Body of pancreas (tissue), 4 donors: ENCODE measurements at regions of chr1 and their contacts with region 1.

Region 1: GRCh38 chr1:26608895-26609294 is 79.3 kb downstream of the RPS6KA1 start:
- DNase-seq: no peak
- ATAC-seq: no peak
- H3K4me3 ChIP-seq: no peak overlapping the region
- H3K27ac ChIP-seq: no peak overlapping the region
- H3K4me1 ChIP-seq: no peaks in the 10 kb centered on the region
- H3K27me3 ChIP-seq: no peaks in the 10 kb centered on the region
- CTCF ChIP-seq: no peak
- POLR2A ChIP-seq: no peak

Region 2: DNA sequence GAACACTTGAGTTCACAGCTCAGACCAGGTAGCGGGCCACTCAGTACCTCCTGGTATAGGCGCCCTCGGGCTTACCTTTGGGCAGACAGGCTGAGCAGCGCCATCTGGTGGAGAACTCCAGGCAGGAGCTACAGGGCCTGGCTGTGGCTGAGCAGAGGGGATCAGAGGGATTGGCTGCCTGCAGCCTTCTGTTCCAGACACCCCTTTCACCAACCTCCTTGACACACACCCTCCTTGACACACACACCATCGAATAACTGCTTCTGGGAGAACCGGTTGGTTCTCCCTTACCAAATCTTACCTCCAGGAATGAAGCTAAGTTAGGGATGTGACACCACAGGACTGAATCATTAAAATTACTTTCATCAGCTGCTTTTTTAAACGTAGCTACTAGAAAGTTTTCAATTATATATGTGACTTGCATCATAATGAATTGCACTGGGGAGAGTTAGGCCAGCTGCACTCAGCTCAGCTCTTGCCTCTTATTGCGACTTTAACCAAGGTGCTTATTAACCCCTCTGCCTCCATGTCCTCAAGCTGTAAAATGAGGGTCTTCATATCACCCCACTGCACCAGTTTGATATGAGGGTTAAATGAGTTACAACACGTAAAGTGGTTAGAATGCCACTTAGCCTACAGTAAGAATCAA is 191.7 kb before region 1 on chr1:
- intact Hi-C with region 1: no loop called
- DNase-seq: peak; percentile 77 to 85 (median 78)
- ATAC-seq: peak; percentile 86
- H3K4me3 ChIP-seq: no peak overlapping the region
- H3K27ac ChIP-seq: no peak overlapping the region
- H3K4me1 ChIP-seq: no peaks in the 10 kb centered on the region
- H3K27me3 ChIP-seq: peaks cover 0 to 4% of the 10 kb centered on the region in 2 donors
- CTCF ChIP-seq: peak; percentile 55 to 78 (median 61)
- POLR2A ChIP-seq: no peak

Region 3: DNA sequence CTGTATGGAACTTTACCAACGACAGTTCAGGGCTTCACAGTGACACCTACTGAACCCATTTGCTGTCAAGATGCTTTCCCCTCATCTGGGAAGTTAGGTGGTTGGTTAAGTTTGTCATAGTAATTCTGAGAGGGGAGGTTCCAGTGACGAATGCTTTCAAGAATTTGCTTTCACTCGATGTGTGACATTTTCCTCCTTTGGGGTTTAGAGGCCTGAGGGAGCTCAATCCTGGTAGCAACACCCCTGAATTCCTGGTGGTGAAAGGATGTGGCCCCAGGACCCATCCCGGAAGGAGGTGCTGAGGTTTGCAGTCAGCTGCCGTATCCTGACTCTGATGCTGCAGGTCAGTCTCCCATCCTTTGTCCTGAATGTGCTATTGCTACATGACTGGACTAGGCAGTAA is 181.7 kb after region 1 on chr1:
- intact Hi-C with region 1: loop called (anchors 5 kb)
- DNase-seq: no peak
- ATAC-seq: no peak
- H3K4me3 ChIP-seq: no peak overlapping the region
- H3K27ac ChIP-seq: no peak overlapping the region
- H3K4me1 ChIP-seq: peaks cover 18% of the 10 kb centered on the region
- H3K27me3 ChIP-seq: no peaks in the 10 kb centered on the region
- CTCF ChIP-seq: no peak
- POLR2A ChIP-seq: no peak